ENCODE measurements at regions of chr2 and their contacts with region 1.

Region 1: DNA sequence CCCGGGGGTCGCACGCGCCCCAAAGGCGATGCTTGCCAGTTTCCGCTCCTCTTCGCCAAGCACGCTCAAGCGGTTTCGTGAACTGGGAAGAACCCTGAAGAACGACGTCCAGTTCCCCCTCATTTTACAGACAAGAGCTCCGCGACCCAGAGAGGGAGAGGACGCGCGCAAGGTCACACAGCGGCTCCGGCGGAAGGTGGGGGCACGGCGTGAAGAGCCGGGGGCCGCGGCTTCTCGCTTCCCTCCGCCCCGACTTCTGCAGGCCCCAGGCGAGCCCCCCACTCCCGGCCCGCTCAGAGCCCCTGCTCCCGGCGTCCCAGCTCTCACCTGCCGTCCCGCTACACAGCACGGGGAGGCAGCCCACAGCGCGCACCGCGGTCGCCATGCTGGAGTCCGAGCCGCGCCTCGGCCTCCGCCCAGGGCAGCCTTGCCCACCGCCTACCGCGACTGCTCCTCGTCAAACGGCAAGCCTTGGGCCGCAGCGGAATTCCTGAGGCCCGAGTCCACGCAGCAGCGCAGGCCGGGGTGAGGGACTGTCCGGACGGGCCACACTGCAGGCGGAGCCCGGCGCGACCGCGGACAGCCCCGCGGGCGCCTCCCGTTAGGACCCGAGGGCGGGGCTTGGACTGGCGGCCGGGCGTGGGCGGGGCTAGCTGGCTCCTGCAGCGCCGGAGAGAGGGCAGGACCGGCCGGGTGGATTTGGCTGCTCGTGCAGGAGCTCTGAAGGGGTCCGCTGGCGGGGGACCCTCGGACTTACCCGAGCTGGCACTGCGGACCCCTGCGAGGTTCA is at the start of gene MRPS5:
- DNase-seq: peak; percentile 91 to 96
- ATAC-seq: peak; percentile 97
- H3K4me3 ChIP-seq: peak within 1 kb of the TSS; percentile 56 to 93
- H3K27ac ChIP-seq: peak within 1 kb of the TSS; percentile 31 to 83
- H3K4me1 ChIP-seq: peaks cover 0 to 6% of the 10 kb centered on the region in 2 donors
- H3K27me3 ChIP-seq: no peaks in the 10 kb centered on the region
- total RNA-seq, gene MRPS5: 31.2 to 38.3 TPM

Region 2: DNA sequence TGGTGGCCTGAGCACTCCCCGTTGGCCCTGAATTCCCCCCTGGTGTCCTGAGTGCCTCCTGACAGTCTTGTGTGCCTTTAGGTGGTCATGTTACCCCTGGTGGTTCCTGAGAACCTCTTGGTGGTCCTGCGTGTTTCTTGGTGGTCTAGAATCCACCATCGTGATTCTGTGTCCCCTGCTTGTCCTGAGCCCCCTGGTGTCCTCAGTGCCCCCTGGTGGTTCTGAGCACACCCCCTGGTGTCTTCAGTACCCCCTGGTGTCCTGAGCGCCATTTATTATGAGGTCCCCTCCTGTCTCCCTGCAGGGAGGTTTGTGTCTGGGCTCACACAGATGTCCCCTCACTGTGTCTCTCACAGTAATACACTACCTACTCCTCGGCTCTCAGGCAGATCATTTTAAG is 157.4 kb before region 1 on chr2:
- intact Hi-C with region 1: no loop called
- DNase-seq: no peak
- ATAC-seq: no peak
- H3K4me3 ChIP-seq: no peak overlapping the region
- H3K27ac ChIP-seq: no peak overlapping the region
- H3K4me1 ChIP-seq: no peaks in the 10 kb centered on the region
- H3K27me3 ChIP-seq: no peaks in the 10 kb centered on the region

Region 3: GRCh38 chr2:95138702-95139101 is 17.1 kb after region 1 on chr2:
- intact Hi-C with region 1: no loop called
- DNase-seq: no peak
- ATAC-seq: no peak
- H3K4me3 ChIP-seq: no peak overlapping the region
- H3K27ac ChIP-seq: no peak overlapping the region
- H3K4me1 ChIP-seq: no peaks in the 10 kb centered on the region
- H3K27me3 ChIP-seq: no peaks in the 10 kb centered on the region

Region 4: GRCh38 chr2:95159690-95160449 is 38.3 kb after region 1 on chr2 and contains the start of gene ZNF514:
- intact Hi-C with region 1: loop called (anchors 5 kb)
- DNase-seq: peak; percentile 84 to 94
- ATAC-seq: peak; percentile 89
- H3K4me3 ChIP-seq: peak within 1 kb of the TSS; percentile 4 to 58
- H3K27ac ChIP-seq: peak within 1 kb of the TSS in 1 of 2 donors; percentile 30
- H3K4me1 ChIP-seq: peaks cover 0 to 7% of the 10 kb centered on the region in 2 donors
- H3K27me3 ChIP-seq: no peaks in the 10 kb centered on the region
- total RNA-seq, gene ZNF514: 13.9 to 30.7 TPM

Region 5: DNA sequence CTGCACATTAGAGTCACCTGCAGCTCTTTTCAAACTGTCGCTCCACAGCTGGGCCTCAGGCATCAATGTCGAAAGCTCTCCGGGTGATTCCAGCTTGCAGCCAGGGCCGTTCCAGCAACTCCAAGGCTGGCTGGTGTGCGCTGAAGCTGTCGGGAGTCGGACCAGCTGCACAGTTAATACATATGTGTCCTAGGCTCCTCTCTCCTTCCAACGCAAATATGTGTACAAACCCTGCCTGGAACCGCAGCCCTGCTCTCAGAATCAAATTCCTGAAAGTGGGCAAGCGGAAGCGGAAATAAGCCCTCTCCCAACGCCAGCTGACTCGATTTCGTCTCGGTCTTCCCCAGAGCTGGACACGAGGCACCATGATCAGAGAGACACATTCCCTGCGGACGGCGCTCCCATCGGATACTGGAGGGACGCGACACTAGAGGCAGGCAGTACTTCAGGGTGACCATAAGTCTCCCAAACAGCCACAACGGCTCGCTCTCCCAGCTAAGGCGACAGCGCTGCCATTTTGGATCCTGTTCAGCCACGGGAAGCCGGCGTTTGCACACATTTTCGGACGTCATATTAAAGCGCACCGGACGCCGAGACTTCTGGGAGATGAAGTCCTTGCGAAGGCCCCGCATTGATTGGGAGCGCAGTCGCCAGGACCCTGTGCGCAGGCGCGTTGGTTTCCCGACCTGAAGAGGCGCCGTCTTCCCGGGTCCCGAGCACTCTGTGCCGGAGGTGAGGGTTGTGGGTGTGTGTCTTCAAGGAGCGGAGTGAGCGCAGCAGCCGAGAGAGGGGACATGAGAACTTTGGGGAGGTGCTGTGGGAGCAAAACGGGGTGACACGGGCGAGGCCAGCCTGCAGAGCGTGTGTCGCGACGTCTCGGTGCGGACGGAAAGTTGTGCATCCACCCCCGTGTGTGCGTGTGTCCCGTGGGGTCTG is 43.8 kb after region 1 on chr2 and contains the start of gene ZNF2:
- intact Hi-C with region 1: loop called in 1 of 2 experiments (anchors 5 kb)
- DNase-seq: peak; percentile 99
- ATAC-seq: peak; percentile 98
- H3K4me3 ChIP-seq: peak within 1 kb of the TSS; percentile 55 to 97
- H3K27ac ChIP-seq: peak within 1 kb of the TSS; percentile 10 to 94
- H3K4me1 ChIP-seq: no peaks in the 10 kb centered on the region
- H3K27me3 ChIP-seq: no peaks in the 10 kb centered on the region
- total RNA-seq, gene ZNF2: 3.1 to 5.9 TPM

Region 6: GRCh38 chr2:95207111-95207961 is 85.7 kb after region 1 on chr2 and contains the start of gene ZNF892:
- intact Hi-C with region 1: loop called in 1 of 2 experiments (anchors 5 kb)
- DNase-seq: peak; percentile 94 to 97
- ATAC-seq: peak; percentile 98
- H3K4me3 ChIP-seq: peak within 1 kb of the TSS; percentile 46 to 58
- H3K27ac ChIP-seq: peak within 1 kb of the TSS in 1 of 2 donors; percentile 88
- H3K4me1 ChIP-seq: no peaks in the 10 kb centered on the region
- H3K27me3 ChIP-seq: peaks cover 0 to 2% of the 10 kb centered on the region in 2 donors
- total RNA-seq, gene ZNF892: 4.3 to 8.3 TPM